ENCODE measurements at regions of chr2 and their contacts with region 1.

Region 1: GRCh38 chr2:174985630-174986029 is 19.6 kb downstream of the CHN1 start:
- DNase-seq: no peak
- H3K4me3 Mint-ChIP-seq: no peak overlapping the region
- H3K27ac Mint-ChIP-seq: no peak overlapping the region
- H3K4me1 Mint-ChIP-seq: peaks cover 7% of the 10 kb centered on the region
- H3K27me3 Mint-ChIP-seq: peaks cover 20% of the 10 kb centered on the region

Region 2: DNA sequence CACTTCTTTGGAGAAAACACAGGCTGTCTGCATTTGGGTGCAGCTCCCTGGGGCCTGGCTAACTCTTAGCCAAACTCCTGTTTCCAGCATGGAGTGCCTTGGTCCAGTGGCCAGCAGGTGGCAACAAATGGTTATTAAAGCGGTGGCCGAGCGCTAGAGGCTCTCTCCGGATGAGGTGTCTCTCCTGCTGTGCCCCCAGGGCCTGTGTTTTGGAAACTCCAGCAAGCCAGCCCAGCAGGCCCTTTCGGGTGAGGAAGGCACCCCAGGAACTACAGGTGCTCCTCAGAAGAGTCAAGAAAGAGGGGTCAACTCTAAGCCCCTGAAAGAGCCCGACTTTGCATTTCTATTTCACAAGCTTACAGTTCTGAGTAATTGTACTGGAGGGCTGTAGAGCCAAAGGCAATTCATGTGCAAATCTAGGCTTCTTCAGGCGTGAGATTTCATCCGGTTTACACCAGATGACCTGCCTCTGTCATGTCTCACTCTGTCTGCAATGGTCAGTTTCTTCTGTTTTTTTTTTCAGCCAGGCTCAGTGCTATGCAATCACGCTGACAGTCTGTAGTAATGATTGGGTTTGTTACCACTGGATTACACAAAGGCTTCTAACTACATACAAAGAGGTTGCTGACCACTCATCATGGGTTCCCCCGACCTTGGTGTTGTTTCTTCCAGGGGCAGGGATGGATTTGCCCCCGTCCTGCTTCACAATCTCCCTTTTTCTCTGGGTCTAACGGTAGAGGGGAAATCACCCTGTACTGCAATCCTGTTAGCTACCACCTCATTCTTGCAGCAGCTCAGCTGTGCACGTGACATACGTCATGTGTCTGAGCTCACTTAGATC is 213.8 kb before region 1 on chr2:
- intact Hi-C with region 1: loop called (anchors 1 kb)
- DNase-seq: no peak
- H3K4me3 Mint-ChIP-seq: no peak overlapping the region
- H3K27ac Mint-ChIP-seq: no peak overlapping the region
- H3K4me1 Mint-ChIP-seq: peaks cover 19% of the 10 kb centered on the region
- H3K27me3 Mint-ChIP-seq: peaks cover 4% of the 10 kb centered on the region

Region 3: DNA sequence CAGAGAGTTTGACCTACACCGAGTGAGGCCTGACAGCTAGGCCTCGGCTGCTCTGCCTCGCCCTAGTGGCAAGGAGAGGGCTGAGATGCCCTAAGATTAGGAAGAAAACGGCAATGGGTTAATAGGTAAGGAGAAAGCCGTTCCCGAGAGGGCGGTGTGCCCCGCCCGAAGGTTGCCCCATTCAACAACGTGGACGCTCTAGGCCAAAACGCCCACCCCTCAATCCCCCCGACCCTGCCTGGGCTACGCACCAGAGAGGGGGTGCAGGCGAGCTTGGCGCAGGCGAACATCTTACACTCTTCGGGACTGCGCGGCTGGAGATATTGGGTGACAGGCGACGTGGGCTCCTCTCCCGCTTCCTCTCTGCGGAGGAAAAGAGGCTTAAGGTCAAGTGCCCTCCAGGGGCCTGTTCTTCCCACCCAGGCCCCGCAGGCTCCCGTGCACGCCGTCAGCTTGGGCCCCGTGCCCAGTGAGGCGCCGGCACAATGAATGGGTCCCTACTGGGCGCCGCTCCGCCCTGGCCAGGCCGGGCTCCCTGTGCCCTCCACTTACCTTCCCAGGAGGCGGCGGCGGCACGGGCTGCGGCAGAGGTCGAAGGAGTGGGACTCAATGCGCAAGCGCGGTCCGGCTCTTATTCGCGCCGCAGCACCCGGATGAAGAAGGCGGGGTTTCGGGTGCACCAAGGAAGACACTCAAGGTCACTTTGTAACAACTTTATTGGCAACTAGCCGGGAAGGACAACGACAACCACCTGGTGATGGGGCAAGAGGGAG is 195.7 kb after region 1 on chr2 and contains the start of gene ATP5MC3:
- intact Hi-C with region 1: no loop called
- DNase-seq: peak; percentile 89
- H3K4me3 Mint-ChIP-seq: peak within 1 kb of the TSS; percentile 89
- H3K27ac Mint-ChIP-seq: peak within 1 kb of the TSS; percentile 84
- H3K4me1 Mint-ChIP-seq: peaks cover 22% of the 10 kb centered on the region
- H3K27me3 Mint-ChIP-seq: no peaks in the 10 kb centered on the region
- total RNA-seq, gene ATP5MC3: 365 and 380 TPM in 2 replicates

Measured in activated T-helper 1 cell treated with anti-CD3 and anti-CD28 coated beads, Interleukin-12 subunit alpha, Interleukin-12 subunit beta, Interleukin-2, Interleukin-4 antibody, amounts not matched to agents 30 ng/mL and 10 ng/mL and 1 ng/mL, durations not matched to agents 14 hours and 24 hours and 36 hours (primary cell).